Sciatic nerve (tissue), 2 donors: ENCODE measurements at regions of chr9 and their contacts with region 1.

Region 1: GRCh38 chr9:70484210-70485130 is 70.0 kb upstream of the KLF9 start:
- DNase-seq: no peak
- ATAC-seq: peak; percentile 61

Region 2: GRCh38 chr9:70413798-70414775 is 70.4 kb before region 1 on chr9 and contains the start of gene KLF9:
- intact Hi-C with region 1: loop called (anchors 5 kb)
- DNase-seq: peak; percentile 94
- ATAC-seq: peak; percentile 84
- total RNA-seq, gene KLF9: 94.6 TPM